GM10248 (cell line): ENCODE measurements at regions of chr2 and their contacts with region 1.

Region 1: GRCh38 chr2:120680136-120680761 is 55.4 kb upstream of the GLI2 start:
- DNase-seq: peak; percentile 74
- CTCF ChIP-seq: peak; percentile 76

Region 2: DNA sequence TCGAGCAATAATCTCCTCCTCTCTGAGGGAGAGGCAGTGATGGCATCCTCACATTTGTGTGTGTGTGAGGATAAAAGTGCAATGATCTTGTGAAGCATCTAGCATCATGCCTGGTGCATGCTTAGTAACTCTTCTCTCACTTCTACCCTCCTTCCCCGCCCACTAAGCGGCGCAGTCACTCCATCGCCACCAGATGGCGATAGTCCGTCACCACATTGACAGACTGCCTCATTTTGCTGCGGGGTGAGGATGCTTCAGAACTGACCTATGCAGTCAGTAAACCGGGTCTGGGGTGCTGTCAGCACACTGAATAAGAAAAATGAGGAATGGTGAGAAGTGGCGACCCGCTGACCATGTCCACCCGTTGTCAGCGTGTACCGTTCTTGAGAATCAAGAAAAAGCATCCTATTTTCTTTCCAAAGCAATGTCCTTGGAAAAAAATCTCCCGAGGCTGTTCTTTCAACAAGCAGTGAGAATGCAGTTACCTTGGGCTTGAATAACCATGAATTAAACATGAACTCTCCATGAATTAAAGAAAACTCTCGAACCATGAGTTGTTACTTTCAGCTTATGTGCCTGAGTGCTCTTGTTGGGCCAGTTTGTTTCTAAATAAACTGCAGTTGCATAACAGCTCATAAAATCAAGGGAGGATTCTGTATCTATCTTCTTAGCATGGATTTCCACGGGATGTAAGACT is 1038.5 kb before region 1 on chr2:
- CTCF ChIA-PET with region 1: interaction called, 17 read pairs
- POLR2A ChIA-PET with region 1: no interaction called
- DNase-seq: peak; percentile 83
- CTCF ChIP-seq: peak; percentile 99

Region 3: GRCh38 chr2:120669121-120669952 is 10.9 kb before region 1 on chr2:
- CTCF ChIA-PET with region 1: interaction called, 26 read pairs
- POLR2A ChIA-PET with region 1: no interaction called
- DNase-seq: no peak
- CTCF ChIP-seq: no peak

Region 4: GRCh38 chr2:120691410-120691809 is 11.2 kb after region 1 on chr2:
- CTCF ChIA-PET with region 1: interaction called, 12 read pairs
- POLR2A ChIA-PET with region 1: no interaction called
- DNase-seq: no peak
- CTCF ChIP-seq: no peak